Common myeloid progenitor, CD34-positive (primary cell): ENCODE measurements at regions of chr7 and their contacts with region 1.

Region 1: DNA sequence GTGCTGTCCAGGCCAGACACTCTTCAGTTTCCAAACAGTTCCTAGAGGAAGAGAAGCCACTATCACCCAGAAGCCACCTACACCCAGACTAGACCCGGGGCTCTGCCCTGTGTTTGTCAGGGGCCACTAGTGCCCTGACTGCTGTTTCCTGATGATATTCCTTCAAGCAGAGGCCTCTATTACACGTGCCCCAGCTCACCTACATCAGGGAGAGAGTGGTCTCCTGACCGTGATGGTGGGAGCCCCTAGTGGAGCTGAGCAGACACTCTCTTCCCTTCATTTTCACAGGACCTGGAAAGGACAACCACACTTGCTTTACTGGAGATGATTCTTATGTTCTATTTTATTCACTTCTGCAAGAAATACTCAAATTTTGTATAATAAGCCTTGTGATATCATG is 9.2 kb downstream of the ZNF394 start:
- DNase-seq: no peak
- H3K4me3 ChIP-seq: no peak overlapping the region
- H3K27ac ChIP-seq: no peak overlapping the region
- H3K4me1 ChIP-seq: no peaks in the 10 kb centered on the region
- H3K27me3 ChIP-seq: no peaks in the 10 kb centered on the region

Region 2: GRCh38 chr7:99472561-99473243 is 18.2 kb before region 1 on chr7 and contains the start of gene ZNF789:
- CTCF ChIA-PET with region 1: interaction called, 11 read pairs
- POLR2A ChIA-PET with region 1: interaction called, 5 read pairs
- DNase-seq: peak; percentile 98 to 99 (median 98)
- H3K4me3 ChIP-seq: peak within 1 kb of the TSS; percentile 81 to 100 (median 91)
- H3K27ac ChIP-seq: peak within 1 kb of the TSS; percentile 70 to 89
- H3K4me1 ChIP-seq: peaks cover 4 to 12% (median 9%) of the 10 kb centered on the region in 4 experiments
- H3K27me3 ChIP-seq: peaks cover 0 to 7% (median 0%) of the 10 kb centered on the region in 5 experiments